ENCODE measurements at regions of chr11 and their contacts with region 1.

Region 1: GRCh38 chr11:117979481-117980211 is 6.5 kb upstream of the IL10RA start:
- DNase-seq: peak; percentile 55
- ATAC-seq: peak; percentile 69
- H3K4me3 Mint-ChIP-seq: no peak overlapping the region
- H3K27ac Mint-ChIP-seq: peak overlapping the region; percentile 90
- H3K4me1 Mint-ChIP-seq: peaks cover 79% of the 10 kb centered on the region
- H3K27me3 Mint-ChIP-seq: no peaks in the 10 kb centered on the region

Region 2: GRCh38 chr11:117907251-117907981 is 72.2 kb before region 1 on chr11:
- CTCF ChIA-PET with region 1: no interaction called
- POLR2A ChIA-PET with region 1: no interaction called
- intact Hi-C with region 1: no loop called
- DNase-seq: peak; percentile 87
- ATAC-seq: peak; percentile 98
- H3K4me3 Mint-ChIP-seq: peak overlapping the region; percentile 39
- H3K27ac Mint-ChIP-seq: peak overlapping the region; percentile 65
- H3K4me1 Mint-ChIP-seq: peaks cover 10% of the 10 kb centered on the region
- H3K27me3 Mint-ChIP-seq: no peaks in the 10 kb centered on the region

Region 3: GRCh38 chr11:117953024-117953671 is 26.5 kb before region 1 on chr11:
- CTCF ChIA-PET with region 1: interaction called, 43 read pairs
- POLR2A ChIA-PET with region 1: interaction called, 3 read pairs
- intact Hi-C with region 1: no loop called
- DNase-seq: peak; percentile 51
- ATAC-seq: peak; percentile 31
- H3K4me3 Mint-ChIP-seq: peak overlapping the region; percentile 20
- H3K27ac Mint-ChIP-seq: peak overlapping the region; percentile 81
- H3K4me1 Mint-ChIP-seq: peaks cover 73% of the 10 kb centered on the region
- H3K27me3 Mint-ChIP-seq: no peaks in the 10 kb centered on the region

Measured in activated CD4-positive, alpha-beta T cell treated with anti-CD3 and anti-CD28 coated beads for 36 hours (primary cell).